HCT116 (cell line): ENCODE measurements at regions of chr19 and their contacts with region 1.

Region 1: GRCh38 chr19:58408152-58409009 is at the start of gene ZNF584:
- DNase-seq: peak; percentile 85
- ATAC-seq: peak; percentile 89
- H3K4me3 ChIP-seq: peak within 1 kb of the TSS; percentile 93 to 99
- H3K27ac ChIP-seq: peak within 1 kb of the TSS; percentile 93
- H3K4me1 ChIP-seq: peaks cover 16 to 30% of the 10 kb centered on the region in 2 experiments
- H3K27me3 ChIP-seq: no peaks in the 10 kb centered on the region
- CTCF ChIP-seq: no peak; a peak in 1 of 6 replicates
- POLR2A ChIP-seq: peak; percentile 81
- RAD21 ChIP-seq: no peak
- total RNA-seq, gene ZNF584: 25.8 TPM

Region 2: GRCh38 chr19:57974434-57974833 is 433.9 kb before region 1 on chr19 and contains the start of gene C19orf18:
- CTCF ChIA-PET with region 1: no interaction called
- POLR2A ChIA-PET with region 1: no interaction called
- RAD21 ChIA-PET with region 1: no interaction called
- intact Hi-C with region 1: no loop called
- DNase-seq: no peak
- ATAC-seq: no peak
- H3K4me3 ChIP-seq: no peak within 1 kb of the TSS
- H3K27ac ChIP-seq: no peak within 1 kb of the TSS
- H3K4me1 ChIP-seq: no peaks in the 10 kb centered on the region
- H3K27me3 ChIP-seq: no peaks in the 10 kb centered on the region
- CTCF ChIP-seq: no peak
- POLR2A ChIP-seq: no peak
- RAD21 ChIP-seq: no peak
- total RNA-seq, gene C19orf18: not detected

Region 3: DNA sequence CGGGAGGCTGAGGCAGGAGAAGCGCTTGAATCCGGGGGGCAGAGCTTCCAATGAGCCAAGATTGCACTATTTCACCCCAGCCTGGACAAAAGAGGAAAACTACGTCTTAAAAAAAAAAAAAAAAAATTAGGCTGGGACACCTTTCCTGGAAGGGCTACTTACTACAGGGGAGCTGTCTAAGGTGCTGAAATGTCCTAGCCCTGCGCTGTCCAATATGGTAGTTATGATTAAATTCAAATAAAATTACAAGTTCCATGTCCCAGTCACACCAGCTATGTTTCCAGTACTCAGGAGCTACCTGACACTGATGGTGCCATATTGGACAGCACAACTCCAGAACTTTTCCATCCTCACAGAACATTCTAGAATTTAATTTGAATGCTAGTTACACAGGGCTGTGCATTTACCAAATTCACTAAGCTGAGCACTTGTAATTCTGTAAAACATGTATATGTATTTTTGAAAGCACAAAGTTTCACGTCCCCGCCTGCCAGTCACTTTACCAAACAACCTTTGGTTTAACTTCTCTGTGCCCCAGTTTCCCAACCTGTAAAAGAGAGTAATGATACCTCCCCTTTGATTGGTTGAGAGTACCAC is 90.8 kb before region 1 on chr19:
- CTCF ChIA-PET with region 1: no interaction called
- POLR2A ChIA-PET with region 1: no interaction called
- RAD21 ChIA-PET with region 1: no interaction called
- intact Hi-C with region 1: no loop called
- DNase-seq: no peak
- ATAC-seq: 0 out of 2 replicates have a peak, but pooled peaks have one; percentile 46
- H3K4me3 ChIP-seq: no peak overlapping the region
- H3K27ac ChIP-seq: no peak overlapping the region
- H3K4me1 ChIP-seq: no peaks in the 10 kb centered on the region
- H3K27me3 ChIP-seq: no peaks in the 10 kb centered on the region
- CTCF ChIP-seq: no peak
- POLR2A ChIP-seq: no peak
- RAD21 ChIP-seq: no peak

Region 4: DNA sequence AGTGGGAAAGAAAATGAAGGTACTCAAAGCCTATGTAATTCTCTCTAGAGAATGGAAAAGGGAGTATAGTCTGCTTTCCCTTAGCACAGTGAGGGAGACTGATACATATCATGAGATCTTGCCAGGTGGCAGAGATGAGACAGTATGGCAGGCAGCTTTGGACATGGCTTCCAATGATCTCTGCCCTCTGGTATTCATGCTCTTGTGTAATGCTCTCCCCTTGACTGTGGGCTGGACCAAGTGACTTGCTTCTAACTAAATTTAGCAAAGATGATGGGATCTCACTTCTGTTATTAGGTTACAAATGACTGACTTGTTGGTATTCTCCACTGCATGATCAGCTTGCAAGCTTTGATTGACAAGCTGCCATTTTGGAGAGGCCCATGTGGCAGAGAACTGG is 21.4 kb after region 1 on chr19:
- CTCF ChIA-PET with region 1: no interaction called
- POLR2A ChIA-PET with region 1: no interaction called
- RAD21 ChIA-PET with region 1: no interaction called
- intact Hi-C with region 1: no loop called
- DNase-seq: no peak
- ATAC-seq: no peak
- H3K4me3 ChIP-seq: no peak overlapping the region
- H3K27ac ChIP-seq: no peak overlapping the region
- H3K4me1 ChIP-seq: no peaks in the 10 kb centered on the region
- H3K27me3 ChIP-seq: no peaks in the 10 kb centered on the region
- CTCF ChIP-seq: no peak
- POLR2A ChIP-seq: no peak
- RAD21 ChIP-seq: no peak

Region 5: DNA sequence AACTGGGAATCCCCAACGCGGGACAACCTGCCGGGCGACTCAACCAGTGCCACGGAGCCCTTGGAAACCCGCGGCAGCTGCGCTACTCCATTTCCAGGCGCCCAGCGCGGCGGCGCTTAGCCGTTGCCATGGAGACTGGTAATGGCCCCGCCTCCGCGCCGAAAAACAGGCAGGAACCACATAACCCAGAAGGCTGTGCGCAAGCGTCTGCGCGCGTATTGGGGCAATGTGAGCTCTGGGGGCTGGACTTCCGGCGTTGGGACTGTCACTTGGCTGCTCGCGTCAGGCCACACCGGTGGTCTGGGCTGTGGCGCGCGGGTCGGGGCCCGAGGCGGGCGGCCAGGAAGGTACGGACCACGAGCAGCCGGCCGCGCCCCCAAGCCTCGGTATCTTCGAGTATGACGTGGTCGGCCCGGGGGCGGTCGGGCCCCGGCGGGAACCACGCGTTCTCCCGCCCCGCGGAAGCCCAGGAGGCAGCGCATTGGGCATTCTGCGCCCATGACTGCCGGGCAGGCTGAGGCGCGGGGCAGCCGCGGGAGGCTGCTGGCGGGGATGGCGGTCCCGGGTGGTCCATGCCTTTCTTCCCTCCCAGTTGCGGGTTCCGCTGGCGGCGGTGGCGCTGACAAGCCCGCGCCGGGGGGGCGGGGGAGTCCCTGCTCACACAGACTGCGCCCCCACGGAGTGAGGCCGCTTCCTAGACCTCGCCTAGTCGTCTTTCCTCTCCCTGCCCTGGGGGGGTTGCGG is 43.1 kb after region 1 on chr19 and contains the start of gene ZNF324B:
- CTCF ChIA-PET with region 1: no interaction called
- POLR2A ChIA-PET with region 1: interaction called, 4 read pairs
- RAD21 ChIA-PET with region 1: no interaction called
- intact Hi-C with region 1: loop called (anchors 5 kb)
- DNase-seq: peak; percentile 90
- ATAC-seq: peak; percentile 94
- H3K4me3 ChIP-seq: peak within 1 kb of the TSS; percentile 62 to 73
- H3K27ac ChIP-seq: peak within 1 kb of the TSS; percentile 66; the same call in 1 of the 2 replicates
- H3K4me1 ChIP-seq: peaks cover 6 to 10% of the 10 kb centered on the region in 2 experiments; a peak in 2 of 4 replicates
- H3K27me3 ChIP-seq: no peaks in the 10 kb centered on the region
- CTCF ChIP-seq: no peak
- POLR2A ChIP-seq: no peak
- RAD21 ChIP-seq: no peak
- total RNA-seq, gene ZNF324B: 9.4 TPM

Region 6: DNA sequence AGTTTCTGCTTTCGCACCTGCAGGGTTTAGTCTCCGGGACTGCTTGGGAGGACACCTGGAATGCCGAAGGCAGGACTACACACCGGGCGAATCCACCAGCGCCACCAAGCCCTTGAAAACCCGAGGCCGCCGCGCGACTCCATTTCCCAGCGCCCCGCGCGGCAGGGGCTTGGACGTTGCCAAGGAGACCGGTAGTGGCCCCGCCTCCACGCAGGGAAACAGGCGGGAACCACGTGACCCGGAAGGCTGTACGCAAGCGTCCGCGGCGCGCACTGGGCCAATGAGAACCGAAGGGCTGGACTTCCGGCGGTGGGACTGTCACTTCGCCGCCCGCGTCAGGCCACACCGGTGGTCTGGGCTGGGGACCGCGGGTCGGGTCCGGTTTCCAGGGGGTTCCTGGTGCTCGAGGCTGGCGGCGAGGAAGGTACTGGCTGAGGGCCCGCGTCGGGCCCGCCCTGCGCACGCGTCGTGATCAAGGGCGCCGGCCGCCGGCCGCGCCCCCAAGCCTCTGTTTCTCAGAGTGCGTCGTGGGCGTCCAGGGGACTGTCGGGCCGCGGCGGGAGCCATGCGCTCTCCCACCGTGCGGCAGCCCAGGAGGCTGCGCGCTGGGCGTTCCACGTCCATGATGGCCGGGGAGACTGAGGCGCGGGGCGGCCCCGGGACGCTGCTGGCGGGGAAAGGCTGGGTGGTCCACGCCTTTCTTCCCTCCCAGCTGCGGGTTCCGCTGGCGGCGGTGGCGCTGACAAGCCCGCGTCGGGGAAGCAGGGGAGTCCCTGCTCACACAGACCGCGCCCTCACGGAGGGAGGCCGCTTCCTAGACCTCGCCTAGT is 58.6 kb after region 1 on chr19 and contains the start of gene ZNF324:
- CTCF ChIA-PET with region 1: no interaction called
- POLR2A ChIA-PET with region 1: no interaction called
- RAD21 ChIA-PET with region 1: no interaction called
- intact Hi-C with region 1: loop called (anchors 1 kb)
- DNase-seq: peak; percentile 93
- ATAC-seq: peak; percentile 90
- H3K4me3 ChIP-seq: peak within 1 kb of the TSS; percentile 77 to 80
- H3K27ac ChIP-seq: peak within 1 kb of the TSS; percentile 70
- H3K4me1 ChIP-seq: peaks cover 2 to 12% of the 10 kb centered on the region in 2 experiments; a peak in 2 of 4 replicates
- H3K27me3 ChIP-seq: no peaks in the 10 kb centered on the region
- CTCF ChIP-seq: no peak
- POLR2A ChIP-seq: no peak
- RAD21 ChIP-seq: no peak
- total RNA-seq, gene ZNF324: 11.3 TPM

Region 7: GRCh38 chr19:58499021-58499927 is 90.9 kb after region 1 on chr19:
- CTCF ChIA-PET with region 1: no interaction called
- POLR2A ChIA-PET with region 1: no interaction called
- RAD21 ChIA-PET with region 1: no interaction called
- intact Hi-C with region 1: no loop called
- DNase-seq: peak; percentile 98
- ATAC-seq: peak; percentile 96
- H3K4me3 ChIP-seq: peak overlapping the region; percentile 62 to 83
- H3K27ac ChIP-seq: peak overlapping the region; percentile 82
- H3K4me1 ChIP-seq: peaks cover 10 to 22% of the 10 kb centered on the region in 2 experiments; a peak in 3 of 4 replicates
- H3K27me3 ChIP-seq: no peaks in the 10 kb centered on the region
- CTCF ChIP-seq: peak in 1 of 3 experiments; percentile 25; a peak in 1 of 6 replicates
- POLR2A ChIP-seq: peak; percentile 55
- RAD21 ChIP-seq: no peak